HEK293 (cell line): ENCODE measurements at regions of chr13 and their contacts with region 1.

Region 1: DNA sequence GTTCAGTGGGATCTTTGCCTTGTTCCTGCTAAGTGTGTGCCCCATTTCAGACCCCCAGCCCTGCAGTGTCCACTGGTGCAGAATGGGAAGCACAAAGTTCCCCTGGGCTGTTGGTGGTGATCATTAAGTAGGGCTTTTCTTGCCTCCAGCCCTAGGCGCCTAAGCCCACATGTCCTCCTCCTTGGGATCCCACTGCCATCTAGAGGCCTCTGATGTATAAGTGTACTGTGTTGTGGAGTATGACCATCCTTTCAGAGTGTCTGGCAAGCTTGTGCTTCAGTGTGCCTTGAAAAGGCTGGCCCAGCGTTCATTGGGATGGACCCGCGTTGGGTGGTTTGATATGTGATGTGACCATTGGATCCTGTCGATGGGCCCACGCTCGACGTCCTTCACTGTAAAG is 71.2 kb downstream of the WASF3 start:
- H3K4me3 ChIP-seq: no peak overlapping the region
- H3K27ac ChIP-seq: no peak overlapping the region
- H3K4me1 ChIP-seq: no peaks in the 10 kb centered on the region
- CTCF ChIP-seq: no peak

Region 2: DNA sequence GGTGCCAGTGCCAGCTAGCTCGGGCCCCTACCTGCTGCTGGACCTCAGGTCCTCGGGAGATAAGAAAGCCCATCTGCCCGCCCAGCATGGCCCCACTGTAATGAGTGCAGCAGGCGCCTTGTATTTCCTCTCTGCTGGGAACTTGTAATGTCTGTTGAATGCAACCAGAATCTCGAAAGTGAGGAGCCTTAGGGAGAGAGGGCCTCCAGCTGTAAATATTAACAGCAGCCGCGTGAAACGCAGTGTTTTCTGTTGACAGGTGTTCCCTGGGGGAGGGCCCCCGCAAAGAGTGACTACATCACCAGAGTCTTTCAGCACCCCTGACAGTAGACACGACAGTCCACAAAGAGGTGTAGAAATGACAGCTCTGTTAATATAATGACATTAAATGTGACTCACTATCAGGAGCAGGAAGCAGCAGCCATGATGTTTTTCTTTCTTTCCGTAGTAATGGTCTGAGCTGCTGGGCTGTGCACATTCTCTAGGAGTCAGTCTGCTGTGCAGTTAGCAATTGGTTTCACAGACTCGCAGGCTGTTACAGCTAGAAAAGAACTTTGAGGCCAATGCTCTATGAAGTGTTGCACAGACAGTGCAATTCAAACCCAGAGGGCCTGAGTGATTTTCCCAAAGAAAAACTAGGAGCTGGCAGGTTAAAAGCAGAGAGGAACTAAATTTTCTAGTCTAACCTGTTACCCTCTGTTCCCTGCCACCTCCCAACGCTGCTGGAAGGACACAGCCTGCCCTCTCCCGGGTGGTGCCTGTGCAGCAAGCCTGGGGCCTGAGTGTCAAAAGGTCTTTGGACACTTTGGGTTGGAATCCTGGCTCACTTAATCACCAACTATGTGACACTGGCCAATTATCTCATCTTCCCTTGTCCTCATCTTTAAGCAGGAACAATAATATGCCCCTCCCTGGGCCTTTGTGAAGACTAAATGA is 129.8 kb before region 1 on chr13:
- CTCF ChIA-PET with region 1: interaction called, 11 read pairs
- POLR2A ChIA-PET with region 1: no interaction called
- H3K4me3 ChIP-seq: no peak overlapping the region
- H3K27ac ChIP-seq: no peak overlapping the region
- H3K4me1 ChIP-seq: no peaks in the 10 kb centered on the region
- CTCF ChIP-seq: no peak

Region 3: DNA sequence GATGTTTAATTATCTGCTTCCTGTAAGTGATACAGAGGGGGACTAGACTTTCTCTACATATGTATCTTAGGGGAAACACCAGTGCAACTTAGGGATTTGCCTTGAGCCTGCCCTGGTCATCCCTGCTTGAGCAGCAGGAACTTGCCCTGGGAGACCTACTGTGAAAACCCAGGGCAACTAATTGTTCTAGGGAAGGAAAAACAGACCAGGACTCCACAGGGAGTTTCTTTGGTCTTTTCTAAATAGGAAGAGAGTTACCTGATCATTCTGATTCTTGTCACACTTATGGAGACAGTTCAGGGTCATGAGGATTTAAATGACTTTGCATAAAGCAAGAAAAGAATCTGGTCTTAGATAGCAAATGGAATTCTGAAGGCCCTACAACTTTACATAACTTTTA is 17.9 kb after region 1 on chr13:
- CTCF ChIA-PET with region 1: no interaction called
- POLR2A ChIA-PET with region 1: no interaction called
- H3K4me3 ChIP-seq: no peak overlapping the region
- H3K27ac ChIP-seq: no peak overlapping the region
- H3K4me1 ChIP-seq: no peaks in the 10 kb centered on the region
- CTCF ChIP-seq: no peak

Region 4: DNA sequence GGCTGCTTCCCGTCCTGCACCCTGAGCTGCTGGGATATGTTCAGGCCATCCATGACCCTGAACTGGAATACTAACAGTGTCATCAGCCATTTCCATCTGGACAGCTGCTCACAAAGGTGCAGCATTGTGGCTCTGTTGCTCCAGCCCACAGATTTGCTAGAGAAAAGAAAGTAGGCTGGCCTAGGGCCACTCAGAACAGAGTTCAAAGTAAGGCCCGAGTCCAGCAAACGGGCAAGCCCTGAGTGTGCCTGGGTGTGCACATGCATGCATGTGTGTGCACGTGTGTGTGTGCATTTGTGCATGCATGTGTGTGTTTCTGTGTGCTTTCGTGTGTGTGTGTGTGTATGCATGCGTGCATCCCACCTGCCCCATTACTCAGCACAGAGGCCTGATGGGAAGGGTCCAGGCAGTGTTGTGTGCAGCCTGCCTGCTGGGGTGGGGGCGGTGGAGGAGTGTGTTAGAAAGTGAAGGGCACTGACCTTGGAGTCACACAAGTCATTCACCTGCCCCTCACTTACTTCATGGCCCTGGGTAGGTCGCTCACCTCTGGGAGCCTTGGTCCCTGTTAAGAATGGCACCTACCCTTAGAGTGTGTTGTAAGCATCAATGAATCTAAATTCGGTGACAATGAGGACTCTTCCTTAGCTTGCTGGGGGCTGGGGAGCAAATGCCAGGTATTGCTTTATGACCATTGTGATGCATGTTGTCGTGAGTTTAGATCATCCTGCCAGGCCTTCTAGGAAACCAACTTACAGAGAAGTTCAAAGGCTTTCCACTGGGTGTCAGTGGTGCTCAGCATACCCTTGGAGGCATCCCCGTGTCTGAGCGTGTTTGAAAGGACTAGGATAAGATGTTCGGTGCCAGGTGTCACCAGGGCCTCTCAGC is 78.7 kb after region 1 on chr13:
- CTCF ChIA-PET with region 1: no interaction called
- POLR2A ChIA-PET with region 1: no interaction called
- H3K4me3 ChIP-seq: no peak overlapping the region
- H3K27ac ChIP-seq: no peak overlapping the region
- H3K4me1 ChIP-seq: no peaks in the 10 kb centered on the region
- CTCF ChIP-seq: peak; percentile 37; the same call in 1 of the 2 replicates